Endothelial cell of umbilical vein (primary cell): ENCODE measurements at regions of chr2 and their contacts with region 1.

Region 1: DNA sequence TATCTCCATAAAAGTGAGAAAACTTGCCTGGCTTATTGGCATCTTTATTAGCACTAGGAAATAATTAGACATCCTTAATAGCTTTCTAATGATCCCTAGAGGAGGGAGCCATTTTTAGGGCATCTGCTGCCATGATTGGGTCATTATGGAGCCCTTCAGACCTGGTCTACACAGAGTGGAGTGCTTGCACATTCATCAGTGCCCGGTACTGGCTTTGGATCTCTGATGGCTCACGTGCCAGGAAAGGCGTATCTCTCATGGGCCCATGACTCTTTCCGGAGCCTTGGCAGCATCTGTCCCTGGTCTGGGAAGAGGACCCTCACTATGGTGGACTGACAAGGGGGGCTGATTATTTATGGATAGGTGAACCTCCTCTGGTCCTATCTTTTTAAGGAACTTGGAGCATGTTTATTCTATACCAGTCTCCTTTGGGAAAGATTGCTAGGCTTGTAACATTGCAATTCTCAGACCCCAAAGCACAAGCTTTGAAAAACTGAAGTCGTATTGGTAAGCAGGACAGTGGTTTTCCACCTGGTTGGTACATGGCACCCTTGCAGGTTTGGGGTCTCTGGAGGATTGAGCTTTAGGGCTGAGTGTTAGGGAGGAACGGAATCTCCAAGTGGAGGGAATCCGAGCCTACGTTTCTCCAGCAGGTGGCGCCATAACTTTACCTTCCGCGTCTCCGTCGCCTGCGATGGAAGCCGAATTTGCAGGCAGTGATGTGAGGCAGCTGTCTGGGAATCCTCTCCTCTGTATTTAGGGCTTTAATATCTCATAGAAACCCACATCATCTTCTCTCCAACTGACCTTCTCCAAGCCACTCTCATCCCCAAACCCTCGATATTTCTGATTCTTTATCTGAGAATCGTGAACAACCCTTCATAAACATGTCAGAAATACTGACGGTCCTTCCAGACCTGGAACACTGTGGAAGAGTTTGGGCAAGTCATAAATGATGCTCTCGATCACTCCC is 27.8 kb downstream of the SIX2 start:
- DNase-seq: peak; percentile 70
- H3K4me3 ChIP-seq: no peak overlapping the region
- H3K27ac ChIP-seq: no peak overlapping the region
- H3K4me1 ChIP-seq: no peaks in the 10 kb centered on the region
- H3K27me3 ChIP-seq: peaks cover 6 to 9% of the 10 kb centered on the region in 2 experiments
- CTCF ChIP-seq: peak; percentile 70 to 83
- POLR2A ChIP-seq: no peak

Region 2: GRCh38 chr2:44912660-44913059 is 68.8 kb before region 1 on chr2:
- CTCF ChIA-PET with region 1: no interaction called
- POLR2A ChIA-PET with region 1: no interaction called
- dilution Hi-C with region 1: no loop called
- intact Hi-C with region 1: no loop called
- DNase-seq: no peak
- H3K4me3 ChIP-seq: no peak overlapping the region
- H3K27ac ChIP-seq: no peak overlapping the region
- H3K4me1 ChIP-seq: no peaks in the 10 kb centered on the region
- H3K27me3 ChIP-seq: peaks cover 8 to 13% of the 10 kb centered on the region in 2 experiments
- CTCF ChIP-seq: no peak
- POLR2A ChIP-seq: no peak

Region 3: GRCh38 chr2:45000921-45001868 is 19.8 kb after region 1 on chr2:
- CTCF ChIA-PET with region 1: interaction called, 20 read pairs
- POLR2A ChIA-PET with region 1: no interaction called
- dilution Hi-C with region 1: no loop called
- intact Hi-C with region 1: no loop called
- DNase-seq: peak; percentile 14
- H3K4me3 ChIP-seq: peak overlapping the region in 2 of 3 experiments; percentile 19 to 34
- H3K27ac ChIP-seq: no peak overlapping the region
- H3K4me1 ChIP-seq: peaks cover 14% of the 10 kb centered on the region
- H3K27me3 ChIP-seq: peaks cover 84 to 96% of the 10 kb centered on the region in 2 experiments
- CTCF ChIP-seq: no peak
- POLR2A ChIP-seq: no peak

Region 4: GRCh38 chr2:45024600-45025291 is 43.3 kb after region 1 on chr2:
- CTCF ChIA-PET with region 1: interaction called, 19 read pairs
- POLR2A ChIA-PET with region 1: no interaction called
- dilution Hi-C with region 1: no loop called
- intact Hi-C with region 1: loop called (anchors 2 kb)
- DNase-seq: peak; percentile 74
- H3K4me3 ChIP-seq: no peak overlapping the region
- H3K27ac ChIP-seq: peak overlapping the region; percentile 8
- H3K4me1 ChIP-seq: no peaks in the 10 kb centered on the region
- H3K27me3 ChIP-seq: peaks cover 2 to 6% of the 10 kb centered on the region in 2 experiments
- CTCF ChIP-seq: peak; percentile 4 to 28
- POLR2A ChIP-seq: no peak

Region 5: GRCh38 chr2:45353879-45354278 is 372.5 kb after region 1 on chr2:
- CTCF ChIA-PET with region 1: no interaction called
- POLR2A ChIA-PET with region 1: no interaction called
- dilution Hi-C with region 1: no loop called
- intact Hi-C with region 1: loop called (anchors 5 kb)
- DNase-seq: peak; percentile 97
- H3K4me3 ChIP-seq: no peak overlapping the region
- H3K27ac ChIP-seq: peak overlapping the region; percentile 85
- H3K4me1 ChIP-seq: peaks cover 17% of the 10 kb centered on the region
- H3K27me3 ChIP-seq: no peaks in the 10 kb centered on the region
- CTCF ChIP-seq: no peak
- POLR2A ChIP-seq: peak; percentile 38

Region 6: GRCh38 chr2:45505138-45505537 is 523.7 kb after region 1 on chr2:
- CTCF ChIA-PET with region 1: interaction called, 13 read pairs
- POLR2A ChIA-PET with region 1: no interaction called
- dilution Hi-C with region 1: no loop called
- intact Hi-C with region 1: no loop called
- DNase-seq: no peak
- H3K4me3 ChIP-seq: no peak overlapping the region
- H3K27ac ChIP-seq: no peak overlapping the region
- H3K4me1 ChIP-seq: no peaks in the 10 kb centered on the region
- H3K27me3 ChIP-seq: no peaks in the 10 kb centered on the region
- CTCF ChIP-seq: no peak
- POLR2A ChIP-seq: no peak

Region 7: GRCh38 chr2:45585267-45585861 is 603.9 kb after region 1 on chr2:
- CTCF ChIA-PET with region 1: interaction called, 60 read pairs
- POLR2A ChIA-PET with region 1: no interaction called
- dilution Hi-C with region 1: no loop called
- intact Hi-C with region 1: no loop called
- DNase-seq: peak; percentile 74
- H3K4me3 ChIP-seq: no peak overlapping the region
- H3K27ac ChIP-seq: no peak overlapping the region
- H3K4me1 ChIP-seq: peaks cover 3% of the 10 kb centered on the region
- H3K27me3 ChIP-seq: no peaks in the 10 kb centered on the region
- CTCF ChIP-seq: peak; percentile 58 to 59
- POLR2A ChIP-seq: no peak